Caco-2 (cell line): ENCODE measurements at regions of chr18 and their contacts with region 1.

Region 1: DNA sequence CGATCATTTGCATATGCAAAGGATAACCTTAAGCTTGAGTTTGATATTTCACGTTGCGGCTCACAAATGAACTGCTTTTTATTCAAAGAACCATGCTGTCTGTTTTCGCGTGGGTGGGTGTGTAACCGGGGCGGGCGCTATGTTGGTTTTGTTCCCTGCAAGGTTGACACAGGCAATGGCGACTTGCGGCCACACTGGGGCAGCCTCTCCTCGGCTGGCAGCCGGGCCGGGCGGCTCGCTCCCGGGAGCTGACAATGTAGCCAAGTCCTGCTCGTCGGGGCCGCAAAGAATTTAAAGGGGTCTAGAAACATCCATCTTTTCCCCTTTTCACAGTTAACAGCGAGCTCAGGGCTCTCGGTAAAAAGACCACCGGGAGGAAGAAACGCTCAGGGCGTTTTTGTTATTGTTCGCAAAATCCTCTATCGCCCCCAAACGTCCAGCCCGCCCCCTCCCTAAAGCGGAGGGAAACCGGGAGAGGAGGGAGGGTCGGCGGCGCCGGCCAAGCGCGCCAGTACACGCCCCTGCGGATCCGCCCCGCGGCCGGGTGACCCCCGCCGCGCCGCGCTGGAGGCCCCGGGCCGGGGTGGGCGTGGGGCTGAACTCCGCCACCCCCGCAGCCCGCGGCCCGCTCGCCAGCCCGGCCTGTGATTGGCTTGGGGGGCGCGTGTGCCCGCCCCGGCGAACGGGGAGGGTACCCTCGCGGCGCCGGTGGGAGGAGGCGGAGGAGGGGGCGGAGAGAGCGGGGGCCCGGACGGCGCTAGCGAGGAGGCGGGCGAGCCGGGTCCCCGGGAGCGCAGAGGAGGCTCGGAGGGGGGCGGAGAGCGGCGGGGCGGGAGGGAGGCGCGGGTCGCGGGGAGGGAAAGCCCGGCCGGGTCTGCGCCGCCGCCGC is at the start of gene NEDD4L:
- DNase-seq: peak; percentile 79 to 85
- H3K4me3 ChIP-seq: peak within 1 kb of the TSS; percentile 81
- H3K4me3 Mint-ChIP-seq: peak within 1 kb of the TSS; percentile 90
- H3K27ac Mint-ChIP-seq: peak within 1 kb of the TSS; percentile 65
- H3K4me1 ChIP-seq: no peaks in the 10 kb centered on the region
- H3K4me1 Mint-ChIP-seq: peaks cover 14% of the 10 kb centered on the region
- H3K27me3 ChIP-seq: no peaks in the 10 kb centered on the region
- H3K27me3 Mint-ChIP-seq: no peaks in the 10 kb centered on the region
- CTCF ChIP-seq: peak; percentile 66 to 71
- total RNA-seq, gene NEDD4L: 84.4 and 85.4 TPM in 2 replicates

Region 2: GRCh38 chr18:57959278-57959677 is 84.5 kb before region 1 on chr18:
- CTCF ChIA-PET with region 1: interaction called, 7 read pairs
- POLR2A ChIA-PET with region 1: no interaction called
- intact Hi-C with region 1: loop called (anchors 2 kb)
- DNase-seq: peak in 1 of 2 experiments; percentile 22
- H3K4me3 ChIP-seq: no peak overlapping the region
- H3K4me3 Mint-ChIP-seq: no peak overlapping the region
- H3K27ac Mint-ChIP-seq: no peak overlapping the region
- H3K4me1 ChIP-seq: no peaks in the 10 kb centered on the region
- H3K4me1 Mint-ChIP-seq: peaks cover 5% of the 10 kb centered on the region
- H3K27me3 ChIP-seq: no peaks in the 10 kb centered on the region
- H3K27me3 Mint-ChIP-seq: no peaks in the 10 kb centered on the region
- CTCF ChIP-seq: peak; percentile 28 to 43

Region 3: DNA sequence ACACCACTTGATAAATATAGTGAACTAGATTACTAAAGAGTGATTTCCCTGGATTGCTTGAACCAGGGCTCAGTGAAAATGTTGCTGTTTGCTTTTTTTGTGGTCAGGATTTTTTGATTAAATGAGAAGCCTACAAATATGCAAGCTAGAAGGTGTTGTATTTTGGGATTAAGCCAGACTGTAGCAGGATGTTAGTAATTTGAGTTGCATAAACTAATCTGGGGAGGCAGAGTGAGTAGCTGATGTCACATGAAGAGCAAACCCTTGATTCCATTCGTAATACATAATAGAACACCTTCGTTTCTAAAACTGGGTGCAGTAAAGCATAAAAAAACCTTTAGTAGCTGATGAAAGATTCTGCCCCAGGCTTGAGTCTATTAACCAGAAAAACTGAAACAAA is 32.3 kb after region 1 on chr18:
- CTCF ChIA-PET with region 1: no interaction called
- POLR2A ChIA-PET with region 1: no interaction called
- intact Hi-C with region 1: no loop called
- DNase-seq: no peak
- H3K4me3 ChIP-seq: no peak overlapping the region
- H3K4me3 Mint-ChIP-seq: no peak overlapping the region
- H3K27ac Mint-ChIP-seq: no peak overlapping the region
- H3K4me1 ChIP-seq: no peaks in the 10 kb centered on the region
- H3K4me1 Mint-ChIP-seq: peaks cover 19% of the 10 kb centered on the region
- H3K27me3 ChIP-seq: no peaks in the 10 kb centered on the region
- H3K27me3 Mint-ChIP-seq: no peaks in the 10 kb centered on the region
- CTCF ChIP-seq: no peak

Region 4: DNA sequence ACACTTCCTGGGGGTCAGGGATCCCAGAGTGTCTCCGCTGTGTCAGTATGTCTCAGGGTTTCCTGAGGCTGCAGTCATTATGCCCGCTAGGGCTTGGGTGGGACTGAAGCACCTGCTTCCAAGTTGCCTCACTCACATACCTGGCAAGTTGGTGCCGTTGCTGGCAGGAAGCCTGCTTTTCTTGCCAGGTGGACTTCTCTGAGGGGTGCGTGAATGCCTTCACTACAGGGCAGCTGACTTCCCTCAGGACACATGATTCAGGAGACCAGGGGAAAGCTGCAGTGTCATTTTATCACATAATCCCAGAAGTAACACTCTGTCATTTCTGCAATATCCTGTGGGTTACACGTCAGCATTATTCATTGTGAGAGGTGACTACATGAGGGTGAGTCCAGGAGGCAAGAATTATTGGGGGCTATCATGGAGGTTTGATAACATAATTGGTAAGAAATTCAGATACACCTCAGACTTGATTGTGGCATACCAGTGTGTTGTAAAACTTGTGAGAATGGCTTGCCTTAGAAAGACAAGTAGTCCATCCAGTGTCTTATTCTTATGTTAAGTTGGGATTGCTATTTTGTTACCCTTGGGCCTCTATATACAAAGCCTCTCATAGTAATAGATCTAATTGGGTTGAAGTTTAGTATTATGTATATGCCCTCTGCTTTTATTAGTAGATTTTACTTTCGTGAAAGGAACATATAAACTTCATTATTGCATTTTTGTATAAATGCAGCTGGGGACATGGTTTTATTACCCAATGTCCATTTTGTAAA is 44.4 kb after region 1 on chr18:
- CTCF ChIA-PET with region 1: no interaction called
- POLR2A ChIA-PET with region 1: no interaction called
- intact Hi-C with region 1: loop called (anchors 5 kb)
- DNase-seq: no peak
- H3K4me3 ChIP-seq: no peak overlapping the region
- H3K4me3 Mint-ChIP-seq: no peak overlapping the region
- H3K27ac Mint-ChIP-seq: peak overlapping the region; percentile 70
- H3K4me1 ChIP-seq: peaks cover 22% of the 10 kb centered on the region
- H3K4me1 Mint-ChIP-seq: peaks cover 7% of the 10 kb centered on the region
- H3K27me3 ChIP-seq: no peaks in the 10 kb centered on the region
- H3K27me3 Mint-ChIP-seq: no peaks in the 10 kb centered on the region
- CTCF ChIP-seq: no peak

Region 5: DNA sequence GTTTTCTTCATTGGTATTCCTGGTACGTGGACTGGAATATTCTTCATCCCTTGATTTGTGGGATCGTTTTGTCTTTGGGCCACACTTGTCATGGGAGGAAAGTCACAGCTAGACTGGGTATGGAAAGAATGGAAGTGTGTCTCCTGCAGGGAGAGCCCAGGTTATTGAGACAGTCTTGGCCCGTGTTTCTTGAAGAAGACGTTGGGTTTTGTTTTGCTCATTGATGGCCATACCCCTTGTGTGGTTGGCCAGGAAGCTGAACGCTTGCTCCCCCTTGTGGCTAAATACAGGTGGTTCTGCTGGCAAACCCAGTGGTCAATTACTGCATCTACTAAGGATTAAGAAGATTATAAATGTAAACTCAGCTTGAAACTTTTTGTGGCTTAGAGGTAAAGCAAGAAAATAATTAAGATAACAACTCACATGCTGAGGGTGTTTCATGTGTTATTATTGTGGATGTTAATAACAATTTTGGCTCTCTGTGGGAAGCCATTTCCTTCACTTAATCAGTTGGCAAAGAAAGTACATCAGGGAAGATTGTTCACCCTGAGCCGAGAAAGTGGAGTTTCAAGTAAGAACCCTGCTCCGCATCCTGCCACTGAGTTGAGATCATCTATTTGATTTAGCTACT is 92.1 kb after region 1 on chr18:
- CTCF ChIA-PET with region 1: no interaction called
- POLR2A ChIA-PET with region 1: no interaction called
- intact Hi-C with region 1: loop called (anchors 5 kb)
- DNase-seq: peak; percentile 44 to 58
- H3K4me3 ChIP-seq: no peak overlapping the region
- H3K4me3 Mint-ChIP-seq: no peak overlapping the region
- H3K27ac Mint-ChIP-seq: no peak overlapping the region
- H3K4me1 ChIP-seq: no peaks in the 10 kb centered on the region
- H3K4me1 Mint-ChIP-seq: no peaks in the 10 kb centered on the region
- H3K27me3 ChIP-seq: no peaks in the 10 kb centered on the region
- H3K27me3 Mint-ChIP-seq: no peaks in the 10 kb centered on the region
- CTCF ChIP-seq: peak; percentile 47 to 54